Common myeloid progenitor, CD34-positive (primary cell): ENCODE measurements at regions of chr6 and their contacts with region 1.

Region 1: GRCh38 chr6:112780498-112781096 is 433.5 kb downstream of the RFPL4B start:
- DNase-seq: peak; percentile 80 to 86 (median 81)
- H3K4me3 ChIP-seq: no peak overlapping the region
- H3K27ac ChIP-seq: no peak overlapping the region
- H3K4me1 ChIP-seq: no peaks in the 10 kb centered on the region
- H3K27me3 ChIP-seq: no peaks in the 10 kb centered on the region

Region 2: DNA sequence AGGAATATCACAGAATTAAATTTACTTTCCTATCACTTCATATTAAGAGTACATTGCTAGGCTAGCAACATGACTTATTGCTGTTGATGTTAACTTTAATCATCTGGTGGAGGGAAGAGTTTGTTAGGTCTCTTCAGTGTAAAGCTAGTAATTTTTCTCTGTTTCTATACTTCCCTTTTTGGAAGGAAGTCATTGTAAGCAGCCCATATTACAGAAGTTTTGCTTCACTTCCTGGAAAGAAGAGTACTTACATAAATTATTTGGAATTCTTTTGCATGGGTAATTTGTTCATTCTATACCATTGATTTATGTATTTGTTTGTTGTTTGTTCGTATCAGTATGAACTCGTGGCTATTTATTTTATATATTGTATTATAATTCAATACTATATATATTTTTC is 28.3 kb before region 1 on chr6:
- CTCF ChIA-PET with region 1: no interaction called
- POLR2A ChIA-PET with region 1: no interaction called
- DNase-seq: peak in 1 of 3 donors; percentile 0
- H3K4me3 ChIP-seq: no peak overlapping the region
- H3K27ac ChIP-seq: no peak overlapping the region
- H3K4me1 ChIP-seq: no peaks in the 10 kb centered on the region
- H3K27me3 ChIP-seq: no peaks in the 10 kb centered on the region

Region 3: DNA sequence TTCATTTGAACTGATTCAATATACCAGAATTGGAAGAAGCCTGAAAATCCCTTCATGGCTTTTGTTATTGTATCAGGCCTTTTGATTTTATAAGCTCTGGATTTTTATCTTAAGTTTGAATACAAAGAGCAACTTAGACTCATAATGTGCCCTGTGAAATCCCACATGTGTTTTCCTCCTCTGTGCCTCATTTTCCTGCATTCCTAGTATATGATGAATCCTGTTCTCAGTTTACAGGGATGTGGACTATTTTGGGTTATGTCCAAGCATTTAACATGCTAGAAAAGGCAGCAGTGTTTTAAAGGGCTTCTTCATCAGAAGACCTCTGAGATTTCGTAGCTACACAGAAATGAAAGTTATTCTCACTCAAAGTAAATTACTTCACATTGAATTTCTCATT is 21.5 kb after region 1 on chr6:
- CTCF ChIA-PET with region 1: no interaction called
- POLR2A ChIA-PET with region 1: no interaction called
- DNase-seq: no peak
- H3K4me3 ChIP-seq: no peak overlapping the region
- H3K27ac ChIP-seq: no peak overlapping the region
- H3K4me1 ChIP-seq: no peaks in the 10 kb centered on the region
- H3K27me3 ChIP-seq: no peaks in the 10 kb centered on the region

Region 4: GRCh38 chr6:112912416-112913101 is 132.0 kb after region 1 on chr6:
- CTCF ChIA-PET with region 1: no interaction called
- POLR2A ChIA-PET with region 1: no interaction called
- DNase-seq: no peak
- H3K4me3 ChIP-seq: no peak overlapping the region
- H3K27ac ChIP-seq: no peak overlapping the region
- H3K4me1 ChIP-seq: no peaks in the 10 kb centered on the region
- H3K27me3 ChIP-seq: no peaks in the 10 kb centered on the region

Region 5: GRCh38 chr6:113858480-113859348 is 1078.1 kb after region 1 on chr6:
- CTCF ChIA-PET with region 1: interaction called, 11 read pairs
- POLR2A ChIA-PET with region 1: no interaction called
- DNase-seq: peak; percentile 85 to 96 (median 94)
- H3K4me3 ChIP-seq: peak overlapping the region; percentile 34 to 98 (median 80)
- H3K27ac ChIP-seq: peak overlapping the region in 1 of 2 experiments; percentile 52
- H3K4me1 ChIP-seq: peaks cover 16 to 46% (median 41%) of the 10 kb centered on the region in 4 experiments
- H3K27me3 ChIP-seq: peaks cover 0 to 36% (median 16%) of the 10 kb centered on the region in 5 experiments

Region 6: GRCh38 chr6:113909234-113909856 is 1128.7 kb after region 1 on chr6:
- CTCF ChIA-PET with region 1: interaction called, 17 read pairs
- POLR2A ChIA-PET with region 1: no interaction called
- DNase-seq: peak; percentile 73 to 88 (median 83)
- H3K4me3 ChIP-seq: no peak overlapping the region
- H3K27ac ChIP-seq: no peak overlapping the region
- H3K4me1 ChIP-seq: peaks cover 0 to 6% (median 0%) of the 10 kb centered on the region in 4 experiments
- H3K27me3 ChIP-seq: no peaks in the 10 kb centered on the region